ENCODE measurements at regions of chr9 and their contacts with region 1.

Region 1: DNA sequence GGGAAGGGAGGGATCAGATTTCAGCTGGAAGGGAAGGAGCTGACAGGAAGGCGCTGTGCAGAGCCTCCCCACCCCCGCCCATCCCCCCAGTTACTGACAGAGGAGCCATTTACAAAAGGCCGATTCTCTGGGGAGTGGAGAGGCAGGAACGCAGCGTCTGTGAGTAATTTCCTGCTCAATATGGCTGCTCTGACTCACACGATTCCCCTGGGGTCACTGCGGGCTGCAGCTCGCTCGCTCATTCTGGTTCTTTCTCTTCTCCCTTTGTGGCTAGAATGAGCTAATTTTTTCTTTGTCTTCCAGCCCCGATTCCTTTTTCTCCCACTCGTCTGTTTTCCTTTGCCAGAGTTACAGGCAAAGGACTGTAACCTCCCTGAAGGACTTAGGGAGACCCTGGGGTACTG is 28.8 kb downstream of the PTPA start:
- DNase-seq: peak; percentile 99
- H3K27ac ChIP-seq: peak overlapping the region; percentile 100
- CTCF ChIP-seq: no peak

Region 2: DNA sequence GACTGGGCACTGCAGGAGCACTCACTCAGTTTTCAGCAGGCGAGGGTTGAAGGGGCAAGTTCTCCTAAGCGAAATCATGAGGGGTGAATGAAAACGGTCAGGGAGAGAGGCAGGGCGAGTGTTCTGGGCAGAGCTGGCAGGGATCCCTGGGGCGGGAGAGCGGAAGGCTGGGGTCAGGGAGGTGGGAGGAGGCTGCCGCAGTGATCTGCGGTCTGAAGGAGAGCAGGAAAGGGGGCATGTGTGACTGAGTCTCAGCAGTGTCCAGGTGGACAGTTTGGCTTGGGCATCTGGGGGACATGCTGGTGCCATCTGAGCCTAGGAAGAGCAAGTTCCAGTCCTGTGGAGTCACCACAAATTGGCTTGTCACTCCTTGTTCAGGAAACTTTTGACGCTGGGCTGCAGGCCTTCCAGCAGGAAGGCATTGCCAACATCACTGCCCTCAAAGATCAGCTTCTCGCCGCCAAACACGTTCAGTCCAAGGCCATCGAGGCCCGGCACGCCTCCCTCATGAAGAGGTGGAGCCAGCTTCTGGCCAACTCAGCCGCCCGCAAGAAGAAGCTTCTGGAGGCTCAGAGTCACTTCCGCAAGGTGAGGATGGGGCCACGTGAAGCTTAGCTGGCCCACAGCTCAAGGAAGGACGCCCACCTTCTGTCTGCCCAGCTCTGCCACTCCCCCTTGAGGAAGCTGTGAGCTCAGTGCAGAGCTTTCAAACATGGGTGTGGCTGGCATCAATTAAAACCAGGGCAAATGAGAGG is 514.4 kb before region 1 on chr9:
- CTCF ChIA-PET with region 1: no interaction called
- POLR2A ChIA-PET with region 1: no interaction called
- DNase-seq: no peak
- H3K27ac ChIP-seq: peak overlapping the region; percentile 99
- CTCF ChIP-seq: no peak

Region 3: DNA sequence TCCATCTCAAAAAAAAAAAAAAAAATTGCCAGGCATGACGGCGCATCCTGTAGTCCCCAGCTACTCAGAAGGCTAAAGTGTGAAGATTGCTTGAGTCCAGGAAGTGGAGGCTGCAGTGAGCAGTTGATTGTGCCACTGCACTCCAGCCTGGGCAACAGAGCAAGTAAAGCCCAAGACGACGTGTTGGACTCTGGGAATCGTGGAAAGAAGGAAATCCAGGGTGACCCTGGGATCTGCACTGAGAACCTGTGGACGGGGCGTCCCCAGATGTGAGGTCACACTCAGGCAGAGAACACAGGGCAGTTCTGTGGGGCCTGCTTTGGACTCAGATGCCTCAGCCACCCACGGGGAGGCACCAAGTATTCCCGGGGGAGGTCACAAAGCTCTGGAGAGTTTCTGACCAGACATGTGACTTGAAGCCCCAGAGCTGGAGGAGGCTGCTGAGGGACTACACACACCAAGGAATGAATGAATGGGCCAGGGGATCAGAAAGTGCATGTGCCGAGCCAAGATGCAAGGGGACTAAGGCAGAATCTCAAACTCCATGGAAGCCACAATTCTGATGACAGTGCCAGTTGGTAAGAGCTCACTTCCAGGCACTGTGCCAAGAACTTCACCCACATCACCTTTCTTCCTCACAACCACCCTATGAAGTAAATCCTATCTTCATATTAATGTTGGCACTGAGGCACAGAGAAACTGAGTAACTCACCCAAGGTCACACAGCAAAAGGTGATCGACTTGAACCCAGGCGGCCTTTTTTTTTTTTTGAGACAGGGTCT is 496.3 kb before region 1 on chr9:
- CTCF ChIA-PET with region 1: no interaction called
- POLR2A ChIA-PET with region 1: no interaction called
- DNase-seq: no peak
- H3K27ac ChIP-seq: peak overlapping the region; percentile 58
- CTCF ChIP-seq: no peak

Region 4: GRCh38 chr9:129089246-129089645 is 50.7 kb before region 1 on chr9:
- CTCF ChIA-PET with region 1: no interaction called
- POLR2A ChIA-PET with region 1: no interaction called
- DNase-seq: no peak
- H3K27ac ChIP-seq: peak overlapping the region; percentile 18
- CTCF ChIP-seq: no peak

Region 5: DNA sequence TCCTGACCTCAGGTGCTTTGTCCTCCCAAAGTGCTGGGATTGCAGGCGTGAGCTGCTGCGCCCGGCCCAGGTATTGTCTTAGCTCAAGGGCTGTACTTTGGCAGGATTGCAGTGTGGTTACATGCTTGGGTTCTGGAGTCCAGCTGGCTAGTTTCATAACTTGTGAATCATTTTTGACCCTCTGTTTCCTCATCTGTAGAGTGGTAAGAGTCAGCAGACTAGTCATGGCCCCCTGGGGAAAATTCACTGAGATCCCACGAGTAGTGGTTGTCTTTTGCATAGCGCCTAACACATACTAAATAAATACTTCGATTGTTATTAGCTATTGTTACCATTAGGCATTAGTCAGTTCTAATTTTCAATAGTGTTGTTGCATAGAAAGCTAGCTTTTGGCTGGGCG is 14.5 kb before region 1 on chr9:
- CTCF ChIA-PET with region 1: interaction called, 31 read pairs
- POLR2A ChIA-PET with region 1: no interaction called
- DNase-seq: peak; percentile 76
- H3K27ac ChIP-seq: peak overlapping the region; percentile 45
- CTCF ChIP-seq: no peak

Region 6: DNA sequence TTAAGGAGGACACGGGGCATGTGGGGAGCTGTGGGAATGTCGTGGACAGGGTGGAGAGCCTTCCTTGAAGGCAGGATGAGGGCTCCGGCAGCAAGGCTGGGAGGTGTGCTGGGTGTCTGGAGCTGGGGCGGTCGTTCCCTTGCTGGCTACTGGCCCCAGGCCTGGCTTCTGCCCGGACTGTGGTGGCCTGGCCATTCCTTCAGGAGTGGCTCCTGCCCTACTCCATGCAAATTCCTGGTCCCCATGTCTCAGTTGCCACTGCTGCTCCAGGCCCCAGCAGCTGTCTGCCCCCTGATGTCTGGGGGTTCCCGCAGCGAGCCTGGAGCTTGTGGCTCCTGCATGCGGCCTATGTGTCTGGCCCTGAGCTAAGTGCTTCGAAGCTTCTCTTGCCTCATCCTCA is 16.2 kb after region 1 on chr9:
- CTCF ChIA-PET with region 1: interaction called, 14 read pairs
- POLR2A ChIA-PET with region 1: no interaction called
- DNase-seq: no peak
- H3K27ac ChIP-seq: peak overlapping the region; percentile 3; the same call in 1 of the 2 replicates
- CTCF ChIP-seq: no peak

Region 7: GRCh38 chr9:129177791-129178559 is 38.0 kb after region 1 on chr9 and contains the start of gene IER5L:
- CTCF ChIA-PET with region 1: interaction called, 63 read pairs
- POLR2A ChIA-PET with region 1: interaction called, 16 read pairs
- DNase-seq: peak; percentile 100
- H3K27ac ChIP-seq: peak within 1 kb of the TSS; percentile 99
- CTCF ChIP-seq: no peak

Region 8: DNA sequence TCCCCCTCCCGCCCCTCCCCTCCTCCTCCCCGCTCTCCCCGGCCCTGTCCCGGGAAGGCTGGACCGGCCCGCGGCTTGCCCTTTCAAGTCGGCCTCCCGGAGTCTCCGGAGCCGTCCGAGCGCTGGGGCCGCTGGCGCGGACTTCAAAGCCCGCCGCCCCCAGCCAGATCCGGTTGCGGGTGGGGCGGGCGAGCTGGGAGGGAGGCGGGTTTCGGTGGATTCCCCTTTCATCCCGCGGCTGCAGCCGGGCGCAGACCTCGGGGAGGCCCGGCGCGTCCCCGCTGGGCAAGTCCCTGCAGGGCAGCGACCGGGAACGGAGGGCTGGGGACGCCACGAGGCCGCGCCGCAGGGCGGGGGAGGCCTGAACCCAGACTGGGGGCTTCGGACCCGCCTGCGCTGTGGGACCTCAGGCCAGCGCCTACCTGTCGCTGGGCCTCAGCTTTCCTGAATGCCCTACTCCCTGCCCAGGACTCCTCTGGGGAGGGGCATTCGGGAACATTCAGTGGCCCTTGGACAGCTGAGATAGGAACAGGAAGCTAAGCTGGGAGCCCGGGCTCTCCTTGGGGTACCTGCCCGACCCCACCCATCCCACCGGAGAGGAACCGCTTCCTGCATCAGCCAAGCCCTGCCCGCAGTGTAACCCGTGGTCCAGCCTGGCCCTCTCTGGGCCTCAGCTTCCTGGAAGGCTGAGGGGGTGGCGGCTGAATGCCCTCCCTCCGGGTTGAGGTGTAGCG is 457.5 kb after region 1 on chr9:
- CTCF ChIA-PET with region 1: interaction called, 10 read pairs
- POLR2A ChIA-PET with region 1: no interaction called
- DNase-seq: peak; percentile 56
- H3K27ac ChIP-seq: peak overlapping the region; percentile 41
- CTCF ChIP-seq: no peak

Region 9: GRCh38 chr9:129619787-129620668 is 480.0 kb after region 1 on chr9:
- CTCF ChIA-PET with region 1: interaction called, 21 read pairs
- POLR2A ChIA-PET with region 1: no interaction called
- DNase-seq: no peak
- H3K27ac ChIP-seq: no peak overlapping the region
- CTCF ChIP-seq: peak; percentile 72